B cell (primary cell): ENCODE measurements at regions of chr17 and their contacts with region 1.

Region 1: GRCh38 chr17:74961657-74962490 is 10.7 kb downstream of the HID1 start:
- DNase-seq: peak; percentile 87
- ATAC-seq: peak; percentile 72
- H3K4me3 ChIP-seq: no peak overlapping the region
- H3K4me3 Mint-ChIP-seq: no peak overlapping the region
- H3K27ac ChIP-seq: no peak overlapping the region
- H3K27ac Mint-ChIP-seq: no peak overlapping the region
- H3K4me1 ChIP-seq: peaks cover 2 to 16% of the 10 kb centered on the region in 2 donors
- H3K4me1 Mint-ChIP-seq: peaks cover 7% of the 10 kb centered on the region
- H3K27me3 ChIP-seq: peaks cover 0 to 9% (median 0%) of the 10 kb centered on the region in 4 experiments
- H3K27me3 Mint-ChIP-seq: peaks cover 11% of the 10 kb centered on the region
- CTCF ChIP-seq: peak; percentile 88

Region 2: GRCh38 chr17:74923533-74924249 is 38.2 kb before region 1 on chr17:
- CTCF ChIA-PET with region 1: interaction called, 16 read pairs
- POLR2A ChIA-PET with region 1: no interaction called
- intact Hi-C with region 1: loop called (anchors 1 kb)
- DNase-seq: peak; percentile 67
- ATAC-seq: peak; percentile 68
- H3K4me3 ChIP-seq: peak overlapping the region in 3 of 5 experiments; percentile 18 to 37 (median 29)
- H3K4me3 Mint-ChIP-seq: peak overlapping the region; percentile 62
- H3K27ac ChIP-seq: no peak overlapping the region
- H3K27ac Mint-ChIP-seq: no peak overlapping the region
- H3K4me1 ChIP-seq: peaks cover 24 to 25% of the 10 kb centered on the region in 2 donors
- H3K4me1 Mint-ChIP-seq: peaks cover 15% of the 10 kb centered on the region
- H3K27me3 ChIP-seq: peaks cover 0 to 76% (median 37%) of the 10 kb centered on the region in 4 experiments
- H3K27me3 Mint-ChIP-seq: peaks cover 51% of the 10 kb centered on the region
- CTCF ChIP-seq: peak; percentile 88

Region 3: GRCh38 chr17:74987418-74987908 is 25.6 kb after region 1 on chr17 and contains the start of gene CDR2L:
- CTCF ChIA-PET with region 1: interaction called, 10 read pairs
- POLR2A ChIA-PET with region 1: no interaction called
- intact Hi-C with region 1: loop called (anchors 1 kb)
- DNase-seq: peak; percentile 95
- ATAC-seq: peak; percentile 99
- H3K4me3 ChIP-seq: peak within 1 kb of the TSS in 4 of 5 experiments; percentile 40 to 67 (median 53)
- H3K4me3 Mint-ChIP-seq: peak within 1 kb of the TSS; percentile 92
- H3K27ac ChIP-seq: no peak within 1 kb of the TSS
- H3K27ac Mint-ChIP-seq: peak within 1 kb of the TSS; percentile 53
- H3K4me1 ChIP-seq: peaks cover 16 to 20% of the 10 kb centered on the region in 2 donors
- H3K4me1 Mint-ChIP-seq: peaks cover 12% of the 10 kb centered on the region
- H3K27me3 ChIP-seq: peaks cover 0 to 41% (median 16%) of the 10 kb centered on the region in 4 experiments
- H3K27me3 Mint-ChIP-seq: peaks cover 16% of the 10 kb centered on the region
- CTCF ChIP-seq: no peak
- total RNA-seq, gene CDR2L: not detected in 2 replicates

Region 4: DNA sequence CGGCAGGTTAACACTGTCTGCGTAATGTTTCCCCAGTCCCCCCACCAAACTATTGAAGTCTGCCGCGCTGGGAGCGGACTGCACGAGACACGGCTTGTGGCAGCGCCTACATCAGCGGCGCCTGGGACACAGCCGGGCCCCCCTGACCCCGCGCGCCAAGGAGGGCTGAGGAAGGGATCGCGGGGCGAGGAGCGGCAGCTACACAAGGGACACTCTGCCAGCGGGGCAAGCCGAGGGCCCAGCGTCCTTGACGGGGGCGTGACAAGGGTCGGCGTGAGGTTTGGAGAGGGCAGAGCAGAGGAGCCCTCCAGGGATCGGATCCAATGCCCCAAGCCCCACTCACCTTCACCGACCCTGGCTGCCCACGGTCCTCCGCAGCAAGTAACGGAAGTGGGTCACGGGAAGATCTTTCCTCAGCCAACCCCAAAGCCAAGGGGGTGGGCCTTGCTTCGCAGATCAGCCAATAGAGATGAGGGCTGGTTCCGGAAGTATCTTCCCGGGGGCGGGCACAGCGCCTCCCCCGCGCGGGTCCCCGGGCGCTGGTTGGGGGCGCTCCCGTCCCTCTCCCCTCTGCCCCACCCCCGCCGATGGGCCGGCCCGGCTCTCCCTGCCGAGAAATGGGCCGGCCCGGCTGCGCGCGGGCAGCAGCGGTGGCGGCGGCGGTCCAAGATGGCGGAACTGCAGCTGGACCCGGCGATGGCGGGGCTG is 84.9 kb after region 1 on chr17 and contains the starts of genes ATP5PD and KCTD2:
- CTCF ChIA-PET with region 1: interaction called, 7 read pairs
- POLR2A ChIA-PET with region 1: no interaction called
- intact Hi-C with region 1: loop called (anchors 1 kb)
- DNase-seq: peak; percentile 96
- ATAC-seq: peak; percentile 97
- H3K4me3 ChIP-seq: peak within 1 kb of the TSS; percentile 77 to 97 (median 89)
- H3K4me3 Mint-ChIP-seq: peak within 1 kb of the TSS; percentile 96
- H3K27ac ChIP-seq: peak within 1 kb of the TSS; percentile 46 to 89
- H3K27ac Mint-ChIP-seq: peak within 1 kb of the TSS; percentile 94
- H3K4me1 ChIP-seq: peaks cover 13 to 16% of the 10 kb centered on the region in 2 donors
- H3K4me1 Mint-ChIP-seq: peaks cover 27% of the 10 kb centered on the region
- H3K27me3 ChIP-seq: no peaks in the 10 kb centered on the region
- H3K27me3 Mint-ChIP-seq: no peaks in the 10 kb centered on the region
- CTCF ChIP-seq: no peak
- total RNA-seq, gene ATP5PD: 98.8 and 101 TPM in 2 replicates
- total RNA-seq, gene KCTD2: 23.2 and 24.6 TPM in 2 replicates

Region 5: GRCh38 chr17:75173526-75173925 is 211.7 kb after region 1 on chr17:
- CTCF ChIA-PET with region 1: interaction called, 36 read pairs
- POLR2A ChIA-PET with region 1: no interaction called
- intact Hi-C with region 1: loop called (anchors 1 kb)
- DNase-seq: no peak
- ATAC-seq: no peak
- H3K4me3 ChIP-seq: no peak overlapping the region
- H3K4me3 Mint-ChIP-seq: no peak overlapping the region
- H3K27ac ChIP-seq: no peak overlapping the region
- H3K27ac Mint-ChIP-seq: no peak overlapping the region
- H3K4me1 ChIP-seq: peaks cover 6 to 8% of the 10 kb centered on the region in 2 donors
- H3K4me1 Mint-ChIP-seq: peaks cover 13% of the 10 kb centered on the region
- H3K27me3 ChIP-seq: no peaks in the 10 kb centered on the region
- H3K27me3 Mint-ChIP-seq: no peaks in the 10 kb centered on the region
- CTCF ChIP-seq: no peak

Region 6: DNA sequence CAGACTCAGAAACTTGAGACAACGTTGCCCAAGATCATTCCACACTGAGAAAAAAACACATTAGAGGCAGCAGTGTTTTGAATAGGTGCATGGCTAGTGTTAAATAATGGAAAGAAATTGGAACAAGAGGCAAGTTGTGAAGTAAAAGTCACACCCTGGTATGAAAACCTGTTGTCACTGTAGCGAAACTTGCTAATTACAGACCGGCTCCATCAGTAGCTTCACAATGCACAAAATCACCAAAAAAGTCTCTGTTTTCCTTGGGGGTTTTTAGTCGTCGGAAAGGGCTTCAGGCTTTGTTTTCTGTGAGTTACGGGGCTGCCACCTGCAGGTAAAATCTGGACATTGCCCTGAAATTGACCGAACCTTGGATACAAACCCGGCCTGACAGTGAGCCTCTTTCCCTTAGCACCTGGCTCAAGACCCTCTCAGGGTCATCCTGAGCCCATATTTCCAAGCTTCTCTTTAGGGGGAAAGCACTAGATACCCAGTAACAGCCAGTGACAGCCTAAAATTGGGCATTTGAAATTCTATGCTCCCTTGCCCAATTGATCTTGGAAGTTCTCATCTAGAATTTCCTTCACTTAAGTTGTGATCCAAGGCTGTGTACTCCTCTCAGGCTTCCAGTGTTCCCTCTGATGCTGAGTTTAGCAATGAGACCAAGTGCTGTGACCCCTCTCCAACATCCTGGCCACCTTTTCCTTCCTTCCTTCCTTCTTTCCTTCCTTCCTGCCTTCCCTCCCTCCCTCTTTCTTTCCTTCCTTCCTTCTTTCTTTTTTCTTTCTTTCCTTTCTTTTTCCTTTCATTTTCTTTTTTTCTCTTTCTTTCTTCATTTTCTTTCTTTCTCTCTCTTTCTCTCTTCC is 450.8 kb after region 1 on chr17:
- CTCF ChIA-PET with region 1: interaction called, 10 read pairs
- POLR2A ChIA-PET with region 1: interaction called, 3 read pairs
- intact Hi-C with region 1: loop called (anchors 2 kb)
- DNase-seq: peak; percentile 90
- ATAC-seq: peak; percentile 94
- H3K4me3 ChIP-seq: peak overlapping the region in 4 of 5 experiments; percentile 9 to 30 (median 23)
- H3K4me3 Mint-ChIP-seq: peak overlapping the region; percentile 68
- H3K27ac ChIP-seq: no peak overlapping the region
- H3K27ac Mint-ChIP-seq: peak overlapping the region; percentile 62
- H3K4me1 ChIP-seq: peaks cover 7 to 14% of the 10 kb centered on the region in 2 donors
- H3K4me1 Mint-ChIP-seq: peaks cover 13% of the 10 kb centered on the region
- H3K27me3 ChIP-seq: no peaks in the 10 kb centered on the region
- H3K27me3 Mint-ChIP-seq: no peaks in the 10 kb centered on the region
- CTCF ChIP-seq: peak; percentile 79